Activated CD4-positive, alpha-beta T cell treated with anti-CD3 and anti-CD28 coated beads for 36 hours (primary cell): ENCODE measurements at regions of chr6 and their contacts with region 1.

Region 1: GRCh38 chr6:149534742-149535141 is 11.1 kb downstream of the PPIL4 start:
- DNase-seq: no peak
- ATAC-seq: no peak
- H3K4me3 Mint-ChIP-seq: no peak overlapping the region
- H3K27ac Mint-ChIP-seq: no peak overlapping the region
- H3K4me1 Mint-ChIP-seq: peaks cover 16% of the 10 kb centered on the region
- H3K27me3 Mint-ChIP-seq: no peaks in the 10 kb centered on the region

Region 2: DNA sequence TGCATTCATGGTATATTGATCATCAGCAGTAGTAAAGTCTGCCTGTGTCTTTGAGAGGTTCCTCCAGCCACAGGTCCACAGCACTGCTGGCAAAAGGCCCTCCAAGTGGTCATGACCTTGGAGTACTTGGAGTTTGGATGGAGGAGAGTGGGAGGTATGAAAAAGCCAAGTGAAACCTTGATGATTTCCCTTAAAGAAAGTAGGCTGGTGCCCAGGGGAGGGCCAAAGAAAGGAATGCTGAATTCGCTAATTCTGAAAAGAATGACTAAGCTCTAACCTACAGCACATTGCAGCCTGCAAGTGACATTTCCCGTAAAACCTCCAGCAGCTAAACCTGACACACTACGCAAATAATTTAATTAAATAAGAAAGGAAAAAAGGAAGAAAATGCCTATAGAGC is 440.6 kb before region 1 on chr6:
- CTCF ChIA-PET with region 1: no interaction called
- POLR2A ChIA-PET with region 1: interaction called, 12 read pairs
- intact Hi-C with region 1: no loop called
- DNase-seq: peak; percentile 35
- ATAC-seq: peak; percentile 49
- H3K4me3 Mint-ChIP-seq: peak overlapping the region; percentile 23
- H3K27ac Mint-ChIP-seq: peak overlapping the region; percentile 84
- H3K4me1 Mint-ChIP-seq: peaks cover 38% of the 10 kb centered on the region
- H3K27me3 Mint-ChIP-seq: no peaks in the 10 kb centered on the region

Region 3: DNA sequence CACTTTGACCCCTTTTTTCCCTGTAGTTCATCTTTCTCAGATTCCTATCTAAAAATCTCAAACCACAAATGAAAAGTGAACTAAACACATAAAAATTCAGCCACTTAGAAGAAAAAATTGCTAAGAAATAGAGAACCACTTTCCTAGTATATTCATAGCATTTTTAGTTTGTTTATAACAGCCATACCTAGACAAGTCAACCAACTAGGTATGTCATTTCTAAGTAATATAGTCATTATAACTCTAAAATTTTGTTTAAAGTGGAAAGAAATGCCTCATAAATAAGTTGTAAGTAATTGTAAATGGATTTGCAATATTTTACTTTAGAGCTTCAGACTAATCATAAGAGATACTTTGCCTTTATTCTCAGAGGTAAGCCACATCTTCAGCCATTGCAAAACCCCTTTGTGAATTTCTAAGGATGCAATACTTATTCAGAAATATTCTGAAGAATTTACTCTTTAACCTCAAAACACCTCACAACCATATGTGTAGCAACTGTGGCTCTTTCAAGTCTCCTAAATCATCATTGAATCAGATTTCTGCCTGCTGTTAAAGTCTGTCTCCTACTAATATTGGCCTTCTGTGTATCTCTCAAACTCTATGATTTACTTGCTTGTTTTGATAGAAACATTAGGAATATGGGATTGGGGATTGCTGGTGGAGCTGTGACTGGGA is 141.6 kb before region 1 on chr6:
- CTCF ChIA-PET with region 1: no interaction called
- POLR2A ChIA-PET with region 1: no interaction called
- intact Hi-C with region 1: no loop called
- DNase-seq: no peak
- ATAC-seq: peak; percentile 61
- H3K4me3 Mint-ChIP-seq: no peak overlapping the region
- H3K27ac Mint-ChIP-seq: peak overlapping the region; percentile 74
- H3K4me1 Mint-ChIP-seq: peaks cover 57% of the 10 kb centered on the region
- H3K27me3 Mint-ChIP-seq: no peaks in the 10 kb centered on the region

Region 4: GRCh38 chr6:149405823-149406765 is 128.6 kb before region 1 on chr6:
- CTCF ChIA-PET with region 1: no interaction called
- POLR2A ChIA-PET with region 1: no interaction called
- intact Hi-C with region 1: no loop called
- DNase-seq: no peak
- ATAC-seq: peak; percentile 27
- H3K4me3 Mint-ChIP-seq: no peak overlapping the region
- H3K27ac Mint-ChIP-seq: peak overlapping the region; percentile 86
- H3K4me1 Mint-ChIP-seq: peaks cover 33% of the 10 kb centered on the region
- H3K27me3 Mint-ChIP-seq: no peaks in the 10 kb centered on the region